H1 (cell line): ENCODE measurements at regions of chr2 and their contacts with region 1.

Region 1: GRCh38 chr2:74104839-74105238 is 42.9 kb downstream of the BOLA3 start:
- DNase-seq: no peak
- H3K4me3 ChIP-seq: no peak overlapping the region
- H3K27ac ChIP-seq: no peak overlapping the region
- H3K4me1 ChIP-seq: peaks cover 4 to 13% (median 12%) of the 10 kb centered on the region in 4 experiments
- H3K27me3 ChIP-seq: no peaks in the 10 kb centered on the region
- CTCF ChIP-seq: no peak
- EP300 ChIP-seq: no peak
- POLR2A ChIP-seq: no peak
- RAD21 ChIP-seq: 0 out of 4 replicates have a peak, but pooled peaks of 1 of the 2 experiments have one; percentile 0

Region 2: GRCh38 chr2:73939419-73939818 is 165.4 kb before region 1 on chr2:
- CTCF ChIA-PET with region 1: interaction called, 10 read pairs
- POLR2A ChIA-PET with region 1: no interaction called
- DNase-seq: peak in 1 of 2 experiments; percentile 7
- H3K4me3 ChIP-seq: no peak overlapping the region
- H3K27ac ChIP-seq: no peak overlapping the region
- H3K4me1 ChIP-seq: no peaks in the 10 kb centered on the region
- H3K27me3 ChIP-seq: no peaks in the 10 kb centered on the region
- CTCF ChIP-seq: peak; percentile 32 to 38 (median 36); a peak in 3 of 4 replicates
- EP300 ChIP-seq: no peak
- POLR2A ChIP-seq: no peak
- RAD21 ChIP-seq: peak; percentile 54 to 64

Region 3: GRCh38 chr2:74119912-74120825 is 15.3 kb after region 1 on chr2:
- CTCF ChIA-PET with region 1: interaction called, 19 read pairs
- POLR2A ChIA-PET with region 1: interaction called, 7 read pairs
- DNase-seq: peak; percentile 54 to 82
- H3K4me3 ChIP-seq: peak overlapping the region; percentile 62 to 80 (median 70)
- H3K27ac ChIP-seq: peak overlapping the region; percentile 88
- H3K4me1 ChIP-seq: no peaks in the 10 kb centered on the region
- H3K27me3 ChIP-seq: peaks cover 0 to 7% (median 0%) of the 10 kb centered on the region in 4 experiments; a peak in 2 of 7 replicates
- CTCF ChIP-seq: peak; percentile 50 to 59 (median 53)
- EP300 ChIP-seq: no peak
- POLR2A ChIP-seq: peak; percentile 44 to 83
- RAD21 ChIP-seq: no peak; a peak in 1 of 4 replicates